ENCODE measurements at regions of chr3 and their contacts with region 1.

Region 1: GRCh38 chr3:99875929-99876841 is 58.5 kb downstream of the CMSS1 start:
- DNase-seq: peak; percentile 77 to 89
- ATAC-seq: peak; percentile 79 to 85 (median 82)
- H3K4me3 ChIP-seq: peak overlapping the region; percentile 70
- H3K27ac ChIP-seq: peak overlapping the region; percentile 88
- H3K4me1 ChIP-seq: peaks cover 49% of the 10 kb centered on the region
- H3K27me3 ChIP-seq: no peaks in the 10 kb centered on the region
- CTCF ChIP-seq: peak; percentile 6

Region 2: GRCh38 chr3:99909714-99910494 is 33.7 kb after region 1 on chr3:
- intact Hi-C with region 1: no loop called
- DNase-seq: no peak
- ATAC-seq: peak in 2 of 4 donors; percentile 40 to 50
- H3K4me3 ChIP-seq: no peak overlapping the region
- H3K27ac ChIP-seq: peak overlapping the region; percentile 57
- H3K4me1 ChIP-seq: peaks cover 33% of the 10 kb centered on the region
- H3K27me3 ChIP-seq: no peaks in the 10 kb centered on the region
- CTCF ChIP-seq: no peak

Region 3: DNA sequence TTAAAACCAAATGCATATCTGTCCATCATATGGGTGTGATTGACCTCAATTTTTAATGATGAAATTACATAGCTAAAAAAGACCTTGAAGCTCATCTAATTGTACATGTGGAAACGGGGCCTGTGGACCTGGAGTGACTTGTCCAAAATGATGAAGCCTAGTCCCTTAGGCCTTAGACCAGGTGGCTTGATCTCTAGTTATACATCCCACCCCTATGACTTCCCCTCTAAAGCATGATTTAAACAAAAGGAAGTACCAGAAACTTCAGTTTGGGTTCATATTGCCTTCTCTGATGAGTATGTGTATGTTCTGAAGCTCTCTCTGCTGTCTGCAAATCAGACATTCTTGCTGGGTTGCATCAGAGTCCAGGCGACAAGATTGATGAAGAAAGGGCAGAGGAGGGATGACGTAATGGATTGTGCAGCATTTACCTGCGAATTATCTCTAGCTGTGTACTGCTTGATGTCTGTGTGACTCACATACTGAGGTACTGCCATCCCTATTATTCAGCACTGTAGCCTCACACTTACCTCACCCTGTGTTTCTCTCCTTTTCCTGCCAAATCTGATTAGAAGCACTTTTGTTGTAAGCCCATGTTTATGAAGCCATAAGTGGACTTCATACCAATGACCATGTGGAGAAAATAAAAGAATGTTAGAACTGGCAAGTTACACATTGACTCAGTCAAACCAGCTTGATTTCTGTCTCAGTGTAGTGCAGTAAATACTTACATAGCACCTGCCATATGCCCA is 126.6 kb after region 1 on chr3:
- intact Hi-C with region 1: loop called (anchors 5 to 10 kb)
- DNase-seq: no peak
- ATAC-seq: peak in 3 of 4 donors; percentile 37 to 63 (median 50)
- H3K4me3 ChIP-seq: no peak overlapping the region
- H3K27ac ChIP-seq: peak overlapping the region; percentile 0
- H3K4me1 ChIP-seq: peaks cover 30% of the 10 kb centered on the region
- H3K27me3 ChIP-seq: no peaks in the 10 kb centered on the region
- CTCF ChIP-seq: no peak

Region 4: DNA sequence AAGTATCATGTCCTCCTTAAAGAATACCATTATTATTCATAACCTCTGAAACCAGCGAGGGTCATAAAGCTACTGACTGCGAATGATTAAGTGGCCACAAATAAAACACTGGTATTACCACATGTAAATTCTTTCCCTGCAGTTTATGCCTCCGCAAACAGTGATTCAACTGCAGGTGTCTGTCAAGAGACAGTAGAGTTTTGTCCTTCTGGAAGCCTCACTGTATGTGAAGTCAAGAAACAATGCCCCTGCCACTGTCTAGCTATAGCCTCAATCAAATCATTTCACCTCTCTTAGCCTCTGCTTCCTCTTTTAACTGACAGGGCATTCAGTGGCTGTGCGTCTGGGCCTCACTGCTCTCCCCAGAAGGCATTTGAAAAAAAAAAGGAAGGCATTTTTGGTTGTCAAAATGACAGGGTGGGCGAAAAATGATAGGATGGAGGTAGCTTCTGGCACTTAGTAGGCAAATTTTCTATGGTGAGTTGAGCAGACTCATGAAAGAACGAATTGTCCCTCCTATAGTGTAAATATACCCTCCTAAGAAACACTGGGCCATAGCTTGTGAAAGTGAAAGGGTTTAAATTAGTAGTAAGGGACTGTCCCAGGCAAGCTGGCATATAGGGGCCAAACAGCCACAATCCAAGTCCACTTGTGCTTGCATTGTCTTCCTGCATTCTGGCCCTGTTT is 171.4 kb after region 1 on chr3:
- intact Hi-C with region 1: loop called (anchors 5 to 10 kb)
- DNase-seq: no peak
- ATAC-seq: peak; percentile 75 to 90 (median 88)
- H3K4me3 ChIP-seq: peak overlapping the region; percentile 39
- H3K27ac ChIP-seq: peak overlapping the region; percentile 89
- H3K4me1 ChIP-seq: peaks cover 63% of the 10 kb centered on the region
- H3K27me3 ChIP-seq: no peaks in the 10 kb centered on the region
- CTCF ChIP-seq: no peak